Activated naive CD4-positive, alpha-beta T cell treated with anti-CD3 and anti-CD28 coated beads for 36 hours (primary cell): ENCODE measurements at regions of chr12 and their contacts with region 1.

Region 1: GRCh38 chr12:66901138-66901932 is 222.5 kb upstream of the GRIP1 start:
- DNase-seq: no peak
- H3K4me3 Mint-ChIP-seq: no peak overlapping the region
- H3K27ac Mint-ChIP-seq: peak overlapping the region; percentile 17
- H3K4me1 Mint-ChIP-seq: peaks cover 35% of the 10 kb centered on the region
- H3K27me3 Mint-ChIP-seq: no peaks in the 10 kb centered on the region

Region 2: DNA sequence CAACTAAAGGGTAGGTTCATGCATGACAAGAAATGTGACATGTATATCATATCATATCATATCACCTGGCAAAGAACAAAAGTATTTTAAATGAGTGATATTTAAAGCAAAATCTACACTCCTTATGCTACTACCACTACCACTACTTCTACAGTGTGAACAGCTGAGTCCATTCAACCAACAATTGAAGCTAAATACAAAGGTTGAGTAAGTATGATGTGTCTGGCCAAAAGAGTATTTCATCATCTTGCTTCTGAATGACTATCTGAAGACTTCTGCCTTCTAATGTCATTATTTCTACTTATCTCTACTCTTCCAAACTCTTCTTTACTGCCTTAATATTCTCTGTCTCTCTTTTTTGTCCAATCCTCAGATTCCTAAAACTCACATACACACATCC is 75.2 kb after region 1 on chr12:
- CTCF ChIA-PET with region 1: no interaction called
- intact Hi-C with region 1: no loop called
- DNase-seq: no peak
- H3K4me3 Mint-ChIP-seq: no peak overlapping the region
- H3K27ac Mint-ChIP-seq: no peak overlapping the region
- H3K4me1 Mint-ChIP-seq: peaks cover 8% of the 10 kb centered on the region
- H3K27me3 Mint-ChIP-seq: no peaks in the 10 kb centered on the region

Region 3: DNA sequence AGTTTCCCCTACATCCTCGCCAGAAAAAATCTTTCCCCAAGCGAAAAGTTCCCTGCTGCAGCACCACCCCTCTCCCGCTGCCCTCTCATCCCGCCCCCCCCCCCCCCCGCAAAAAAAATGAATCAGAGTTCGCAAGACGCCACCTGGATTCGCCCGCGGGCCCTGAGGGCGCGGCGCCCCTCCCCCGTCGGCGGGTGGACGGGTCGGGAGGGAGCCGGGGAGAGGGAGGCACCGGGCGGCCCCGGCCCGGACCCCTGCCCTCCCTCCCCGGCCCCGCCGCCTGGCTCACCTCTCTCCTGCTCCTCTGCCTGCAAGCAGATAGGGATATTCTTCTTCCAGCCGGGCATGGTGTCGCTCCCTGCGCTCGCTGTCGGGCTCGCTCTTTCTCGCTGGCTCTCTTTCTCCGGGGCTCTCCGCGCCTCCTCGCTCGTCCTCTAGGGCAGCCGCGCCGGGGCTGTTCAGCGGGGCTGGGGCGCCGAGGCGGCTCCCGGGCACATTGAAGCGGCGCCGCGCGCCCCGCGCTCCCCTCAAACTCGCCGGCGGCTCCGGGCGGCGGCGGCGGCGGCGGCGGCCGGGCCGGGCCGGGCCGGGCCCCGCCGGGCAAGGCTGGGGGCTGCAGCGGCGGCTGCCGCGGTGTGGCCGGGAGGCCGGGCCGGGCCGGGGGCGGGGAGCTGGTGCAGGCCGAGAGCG is 167.6 kb after region 1 on chr12:
- CTCF ChIA-PET with region 1: no interaction called
- intact Hi-C with region 1: loop called (anchors 2 kb)
- DNase-seq: peak; percentile 51
- H3K4me3 Mint-ChIP-seq: peak overlapping the region; percentile 91
- H3K27ac Mint-ChIP-seq: peak overlapping the region; percentile 72
- H3K4me1 Mint-ChIP-seq: peaks cover 25% of the 10 kb centered on the region
- H3K27me3 Mint-ChIP-seq: peaks cover 20% of the 10 kb centered on the region

Region 4: GRCh38 chr12:67355578-67356379 is 454.4 kb after region 1 on chr12:
- CTCF ChIA-PET with region 1: no interaction called
- intact Hi-C with region 1: loop called (anchors 5 kb)
- DNase-seq: peak; percentile 17
- H3K4me3 Mint-ChIP-seq: no peak overlapping the region
- H3K27ac Mint-ChIP-seq: no peak overlapping the region
- H3K4me1 Mint-ChIP-seq: peaks cover 25% of the 10 kb centered on the region
- H3K27me3 Mint-ChIP-seq: no peaks in the 10 kb centered on the region

Region 5: GRCh38 chr12:67441736-67442346 is 540.5 kb after region 1 on chr12:
- CTCF ChIA-PET with region 1: no interaction called
- intact Hi-C with region 1: loop called (anchors 5 kb)
- DNase-seq: peak; percentile 93
- H3K4me3 Mint-ChIP-seq: peak overlapping the region; percentile 7
- H3K27ac Mint-ChIP-seq: no peak overlapping the region
- H3K4me1 Mint-ChIP-seq: peaks cover 19% of the 10 kb centered on the region
- H3K27me3 Mint-ChIP-seq: no peaks in the 10 kb centered on the region